Motor neuron (in vitro differentiated cells): ENCODE measurements at regions of chr13 and their contacts with region 1.

Region 1: GRCh38 chr13:41411522-41411921 is 45.8 kb upstream of the RGCC start:
- ATAC-seq: peak in 4 of 8 experiments; percentile 43 to 98 (median 90)
- H3K4me3 ChIP-seq: no peak overlapping the region
- H3K27ac ChIP-seq: no peak overlapping the region
- H3K4me1 ChIP-seq: no peaks in the 10 kb centered on the region

Region 2: GRCh38 chr13:41122838-41123237 is 288.7 kb before region 1 on chr13:
- in situ Hi-C with region 1: no loop called
- ATAC-seq: peak in 1 of 8 experiments; percentile 48
- H3K4me3 ChIP-seq: no peak overlapping the region
- H3K27ac ChIP-seq: no peak overlapping the region
- H3K4me1 ChIP-seq: peaks cover 0 to 3% of the 10 kb centered on the region in 2 donors

Region 3: DNA sequence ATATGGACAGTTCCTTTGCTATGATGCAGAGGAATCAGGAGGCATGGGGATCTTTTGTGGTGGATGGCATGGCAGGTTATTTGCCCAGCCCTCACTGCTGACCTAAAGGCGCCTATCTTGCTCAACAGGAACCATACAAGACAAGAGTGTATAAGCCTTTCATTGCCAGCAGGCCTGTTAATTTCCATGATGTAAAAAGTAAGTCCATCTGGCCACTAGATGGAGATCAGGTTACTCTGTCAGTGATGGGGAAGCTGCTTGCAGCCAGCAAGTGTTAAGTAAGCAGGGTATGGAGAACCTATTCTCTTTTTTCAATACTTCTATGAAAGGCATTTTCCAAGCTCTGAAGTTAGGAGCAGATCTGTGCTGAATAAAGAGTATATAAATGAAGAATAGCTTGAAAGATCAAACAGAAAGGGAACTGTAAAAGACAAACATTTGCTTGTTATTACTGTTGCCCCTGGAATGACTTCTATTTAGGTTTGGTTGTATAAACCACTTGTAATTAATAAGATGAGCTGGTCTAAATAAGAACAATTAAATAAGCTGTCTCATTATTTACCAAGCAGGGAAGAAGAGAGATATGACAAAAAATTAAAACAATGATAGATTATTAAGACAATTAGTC is 256.7 kb after region 1 on chr13:
- in situ Hi-C with region 1: loop called in 1 of 9 experiments (anchors 25 kb)
- ATAC-seq: peak; percentile 74 to 100 (median 94)
- H3K4me3 ChIP-seq: no peak overlapping the region
- H3K27ac ChIP-seq: no peak overlapping the region
- H3K4me1 ChIP-seq: no peaks in the 10 kb centered on the region

Region 4: DNA sequence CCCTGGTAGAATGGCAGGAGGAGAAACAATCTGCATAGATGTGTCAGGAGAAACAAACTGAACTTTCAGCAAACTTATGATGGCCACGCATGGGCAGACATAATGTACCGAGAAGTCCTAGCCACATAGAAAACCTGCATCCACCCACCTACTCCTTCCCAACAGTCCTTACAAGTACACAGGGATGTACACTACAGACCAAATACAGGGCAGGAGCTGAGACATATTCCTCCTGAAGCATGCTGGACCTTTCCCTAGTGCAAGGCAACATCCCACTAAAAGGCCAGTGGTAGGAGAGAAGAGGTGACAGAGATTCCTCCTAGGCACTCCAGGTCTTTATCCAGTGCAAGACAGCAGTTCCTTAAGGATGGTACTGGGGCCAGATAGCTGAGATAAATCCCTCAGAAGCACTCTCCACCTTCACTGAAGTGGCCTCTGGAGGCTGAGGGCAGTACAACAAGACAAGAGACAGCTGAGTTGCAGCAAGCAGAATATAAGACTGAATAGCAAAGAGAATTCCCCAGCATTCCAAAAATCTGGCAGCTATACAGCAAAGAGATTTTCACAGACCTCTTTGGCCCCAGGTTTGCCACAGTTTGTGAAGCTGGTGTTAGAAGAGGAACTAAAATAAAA is 531.1 kb after region 1 on chr13:
- in situ Hi-C with region 1: no loop called
- ATAC-seq: peak in 7 of 8 experiments; percentile 41 to 98 (median 92)
- H3K4me3 ChIP-seq: no peak overlapping the region
- H3K27ac ChIP-seq: no peak overlapping the region
- H3K4me1 ChIP-seq: peaks cover 0 to 5% of the 10 kb centered on the region in 2 donors